HEK293 (cell line): ENCODE measurements at regions of chr19 and their contacts with region 1.

Region 1: GRCh38 chr19:58326914-58327726 is at the start of gene ZSCAN22:
- H3K4me3 ChIP-seq: peak within 1 kb of the TSS; percentile 98
- H3K27ac ChIP-seq: peak within 1 kb of the TSS; percentile 67; the same call in 1 of the 2 replicates
- H3K4me1 ChIP-seq: peaks cover 3% of the 10 kb centered on the region; the same call in 1 of the 2 replicates
- CTCF ChIP-seq: peak; percentile 70

Region 2: DNA sequence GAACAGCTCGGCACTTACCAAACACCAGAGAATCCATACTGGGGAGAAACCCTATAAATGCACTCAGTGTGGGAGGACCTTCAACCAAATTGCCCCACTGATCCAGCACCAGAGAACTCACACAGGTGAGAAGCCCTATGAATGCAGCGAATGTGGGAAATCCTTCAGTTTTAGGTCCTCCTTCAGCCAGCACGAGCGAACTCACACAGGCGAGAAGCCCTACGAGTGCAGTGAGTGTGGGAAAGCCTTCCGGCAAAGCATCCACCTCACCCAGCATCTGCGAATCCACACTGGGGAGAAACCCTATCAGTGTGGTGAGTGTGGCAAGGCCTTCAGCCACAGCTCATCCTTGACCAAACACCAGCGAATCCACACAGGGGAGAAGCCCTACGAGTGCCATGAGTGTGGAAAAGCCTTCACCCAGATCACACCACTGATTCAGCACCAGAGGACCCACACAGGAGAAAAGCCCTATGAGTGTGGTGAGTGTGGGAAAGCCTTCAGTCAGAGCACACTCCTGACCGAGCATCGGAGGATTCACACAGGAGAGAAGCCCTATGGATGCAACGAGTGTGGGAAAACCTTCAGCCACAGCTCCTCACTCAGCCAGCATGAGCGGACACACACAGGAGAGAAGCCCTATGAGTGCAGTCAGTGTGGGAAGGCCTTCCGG is 259.7 kb before region 1 on chr19:
- CTCF ChIA-PET with region 1: no interaction called
- POLR2A ChIA-PET with region 1: no interaction called
- H3K4me3 ChIP-seq: no peak overlapping the region
- H3K27ac ChIP-seq: no peak overlapping the region
- H3K4me1 ChIP-seq: no peaks in the 10 kb centered on the region
- CTCF ChIP-seq: no peak

Region 3: GRCh38 chr19:58097781-58098681 is 229.1 kb before region 1 on chr19 and contains the start of gene ZSCAN18:
- CTCF ChIA-PET with region 1: no interaction called
- POLR2A ChIA-PET with region 1: no interaction called
- H3K4me3 ChIP-seq: peak within 1 kb of the TSS; percentile 98
- H3K27ac ChIP-seq: peak within 1 kb of the TSS; percentile 44; the same call in 1 of the 2 replicates
- H3K4me1 ChIP-seq: no peaks in the 10 kb centered on the region
- CTCF ChIP-seq: peak; percentile 11; the same call in 1 of the 2 replicates

Region 4: GRCh38 chr19:58252102-58252685 is 74.9 kb before region 1 on chr19:
- CTCF ChIA-PET with region 1: no interaction called
- POLR2A ChIA-PET with region 1: no interaction called
- H3K4me3 ChIP-seq: no peak overlapping the region
- H3K27ac ChIP-seq: no peak overlapping the region
- H3K4me1 ChIP-seq: no peaks in the 10 kb centered on the region
- CTCF ChIP-seq: no peak

Region 5: GRCh38 chr19:58305065-58305931 is 21.8 kb before region 1 on chr19 and contains the start of gene ERVK3-1:
- CTCF ChIA-PET with region 1: interaction called, 4 read pairs
- POLR2A ChIA-PET with region 1: interaction called, 11 read pairs
- H3K4me3 ChIP-seq: peak within 1 kb of the TSS; percentile 96
- H3K27ac ChIP-seq: peak within 1 kb of the TSS; percentile 67
- H3K4me1 ChIP-seq: no peaks in the 10 kb centered on the region
- CTCF ChIP-seq: peak; percentile 84; the same call in 1 of the 2 replicates

Region 6: DNA sequence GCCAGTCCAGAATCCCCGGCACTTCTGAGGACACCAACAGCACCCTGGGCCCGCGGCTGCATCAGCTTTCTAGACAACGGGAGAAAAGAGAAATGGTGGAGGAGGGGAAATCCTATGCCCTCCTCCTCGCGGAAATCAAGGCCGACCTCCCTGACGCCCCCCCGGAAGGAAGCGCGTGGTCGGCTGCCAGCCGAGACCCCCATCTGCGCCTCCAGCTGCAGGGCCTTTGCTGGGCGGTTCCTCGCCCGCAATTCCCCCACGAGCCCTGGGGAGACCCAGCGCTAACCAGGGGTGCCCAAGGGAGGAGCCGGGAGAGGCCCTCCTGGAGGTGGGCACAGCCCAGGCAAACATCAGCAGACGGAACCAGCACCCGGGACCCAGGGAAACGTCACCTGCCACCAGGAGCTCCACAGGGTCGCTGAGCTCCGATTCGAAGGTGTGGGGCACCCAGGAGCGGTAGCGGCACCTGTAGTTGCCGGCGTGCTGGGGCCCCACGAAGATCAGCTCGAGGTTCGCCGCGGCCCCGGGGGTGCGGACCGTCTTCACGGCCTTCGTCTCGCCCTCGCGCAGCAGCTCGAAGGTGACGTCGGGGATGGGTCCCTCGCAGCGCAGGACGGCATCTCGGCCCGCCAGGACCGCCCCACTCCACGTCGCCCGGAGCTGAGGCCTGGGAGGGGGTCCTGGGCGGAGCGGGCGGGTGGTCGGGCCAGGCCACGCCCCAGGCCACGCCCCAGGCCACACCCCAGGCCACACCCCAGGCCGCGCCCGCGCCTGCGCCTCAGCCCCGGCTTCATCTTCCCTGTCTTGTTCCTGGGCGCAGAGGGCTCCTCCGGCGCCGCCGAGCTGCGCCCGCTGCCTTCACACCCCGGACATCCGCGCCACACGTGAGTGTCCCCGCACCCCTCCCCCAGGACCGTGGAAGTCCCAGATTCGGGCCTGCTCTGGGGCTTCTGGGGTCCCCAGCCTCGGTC is 20.1 kb after region 1 on chr19:
- CTCF ChIA-PET with region 1: interaction called, 3 read pairs
- POLR2A ChIA-PET with region 1: interaction called, 12 read pairs
- H3K4me3 ChIP-seq: peak overlapping the region; percentile 79
- H3K27ac ChIP-seq: peak overlapping the region; percentile 34; the same call in 1 of the 2 replicates
- H3K4me1 ChIP-seq: no peaks in the 10 kb centered on the region
- CTCF ChIP-seq: no peak